MCF 10A (cell line): ENCODE measurements at regions of chr16 and their contacts with region 1.

Region 1: GRCh38 chr16:87636072-87636684 is 33.9 kb downstream of the JPH3 start:
- DNase-seq: peak; percentile 93
- H3K4me3 Mint-ChIP-seq: peak overlapping the region; percentile 67
- H3K27ac Mint-ChIP-seq: no peak overlapping the region
- H3K4me1 Mint-ChIP-seq: no peaks in the 10 kb centered on the region
- H3K27me3 Mint-ChIP-seq: peaks cover 32% of the 10 kb centered on the region
- CTCF ChIP-seq: peak; percentile 86

Region 2: DNA sequence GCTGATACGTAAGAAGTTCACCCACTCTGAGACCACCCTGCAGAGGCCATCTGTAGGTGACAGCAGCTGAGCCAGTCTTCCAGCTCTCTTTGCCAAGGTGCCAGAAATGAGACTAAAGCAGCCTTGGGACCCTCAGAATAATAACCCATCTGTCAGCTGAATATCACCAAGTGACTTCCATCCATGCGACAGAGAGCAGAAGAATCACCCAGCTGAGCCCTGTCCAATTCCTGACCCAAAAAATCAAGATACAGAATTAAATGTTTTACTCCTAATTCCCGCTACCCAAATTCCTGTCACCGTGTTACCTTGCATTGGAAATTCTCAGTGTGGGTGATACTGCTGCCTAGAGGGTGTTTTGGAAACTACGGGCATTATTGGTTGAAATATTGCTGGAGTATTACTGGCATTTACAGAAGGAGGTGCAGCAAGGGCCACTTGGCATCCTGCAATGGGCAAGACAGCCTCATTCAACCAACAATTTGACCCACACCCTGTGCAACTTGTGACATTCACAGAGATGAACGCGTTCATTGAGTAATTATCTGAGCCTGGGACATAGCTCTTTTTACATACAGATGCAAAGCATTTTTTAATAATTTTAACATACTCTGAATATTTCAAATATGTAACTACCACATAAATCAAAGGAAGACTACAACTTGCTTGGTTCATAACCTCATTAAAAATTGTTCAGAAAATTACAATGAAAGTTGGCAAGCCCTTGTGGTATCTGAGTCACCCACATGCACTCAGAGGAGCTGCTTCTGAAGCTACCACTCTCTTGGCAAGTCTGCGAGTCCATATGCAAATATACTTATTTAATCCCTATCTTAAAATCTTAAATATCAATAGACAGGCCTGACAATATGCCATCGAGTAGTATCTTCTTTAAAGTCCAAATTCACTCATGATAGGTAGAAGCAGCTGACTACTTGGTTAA is 445.6 kb before region 1 on chr16:
- CTCF ChIA-PET with region 1: no interaction called
- POLR2A ChIA-PET with region 1: no interaction called
- intact Hi-C with region 1: no loop called
- DNase-seq: no peak
- H3K4me3 Mint-ChIP-seq: no peak overlapping the region
- H3K27ac Mint-ChIP-seq: no peak overlapping the region
- H3K4me1 Mint-ChIP-seq: no peaks in the 10 kb centered on the region
- H3K27me3 Mint-ChIP-seq: no peaks in the 10 kb centered on the region
- CTCF ChIP-seq: no peak

Region 3: DNA sequence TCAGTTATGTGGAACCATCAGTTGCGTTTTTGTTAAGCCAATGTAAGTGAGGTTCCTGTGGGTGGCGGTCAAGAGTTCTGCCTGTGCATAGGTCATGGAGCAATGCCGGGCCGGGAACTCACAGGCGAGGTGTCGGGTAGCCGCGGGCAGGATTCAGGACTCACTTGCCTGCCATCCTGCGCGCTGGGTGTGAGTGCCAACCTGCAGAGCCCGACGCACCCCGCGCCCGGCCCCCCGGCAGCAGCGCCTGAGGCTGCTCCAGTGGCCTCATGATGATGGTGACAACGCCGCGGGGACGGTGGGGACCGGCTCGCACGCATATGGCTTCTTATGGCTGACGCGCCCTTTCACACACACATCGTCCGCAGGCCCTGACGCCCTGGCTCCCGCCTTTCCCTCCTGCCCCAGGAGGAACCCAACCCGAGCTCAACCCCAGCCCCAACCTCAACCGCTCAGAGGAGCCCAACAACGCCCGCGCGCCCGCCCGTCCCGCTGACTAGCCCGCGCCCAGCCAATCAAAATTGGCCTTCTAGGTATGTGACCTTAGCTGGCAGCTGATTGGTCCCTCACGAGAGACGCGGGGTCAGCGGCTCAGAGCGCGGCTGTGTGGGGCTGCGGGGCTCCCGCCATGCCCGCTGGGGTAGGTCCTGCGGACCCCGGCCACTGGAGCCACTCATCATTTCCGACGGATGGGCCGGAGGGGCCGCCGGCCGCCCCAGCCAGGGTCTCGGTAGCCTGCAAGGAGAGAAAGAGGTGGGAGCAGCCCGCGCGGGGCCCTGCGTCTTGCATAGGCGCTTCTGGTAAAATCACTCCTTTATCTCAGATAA is 319.0 kb before region 1 on chr16 and contains the start of gene C16orf95:
- CTCF ChIA-PET with region 1: interaction called, 4 read pairs
- POLR2A ChIA-PET with region 1: interaction called, 6 read pairs
- intact Hi-C with region 1: loop called (anchors 2 kb)
- DNase-seq: peak; percentile 95
- H3K4me3 Mint-ChIP-seq: peak within 1 kb of the TSS; percentile 83
- H3K27ac Mint-ChIP-seq: peak within 1 kb of the TSS; percentile 93
- H3K4me1 Mint-ChIP-seq: peaks cover 6% of the 10 kb centered on the region
- H3K27me3 Mint-ChIP-seq: no peaks in the 10 kb centered on the region
- CTCF ChIP-seq: peak; percentile 50
- total RNA-seq, gene C16orf95: 5.7 and 5.8 TPM in 2 replicates

Region 4: DNA sequence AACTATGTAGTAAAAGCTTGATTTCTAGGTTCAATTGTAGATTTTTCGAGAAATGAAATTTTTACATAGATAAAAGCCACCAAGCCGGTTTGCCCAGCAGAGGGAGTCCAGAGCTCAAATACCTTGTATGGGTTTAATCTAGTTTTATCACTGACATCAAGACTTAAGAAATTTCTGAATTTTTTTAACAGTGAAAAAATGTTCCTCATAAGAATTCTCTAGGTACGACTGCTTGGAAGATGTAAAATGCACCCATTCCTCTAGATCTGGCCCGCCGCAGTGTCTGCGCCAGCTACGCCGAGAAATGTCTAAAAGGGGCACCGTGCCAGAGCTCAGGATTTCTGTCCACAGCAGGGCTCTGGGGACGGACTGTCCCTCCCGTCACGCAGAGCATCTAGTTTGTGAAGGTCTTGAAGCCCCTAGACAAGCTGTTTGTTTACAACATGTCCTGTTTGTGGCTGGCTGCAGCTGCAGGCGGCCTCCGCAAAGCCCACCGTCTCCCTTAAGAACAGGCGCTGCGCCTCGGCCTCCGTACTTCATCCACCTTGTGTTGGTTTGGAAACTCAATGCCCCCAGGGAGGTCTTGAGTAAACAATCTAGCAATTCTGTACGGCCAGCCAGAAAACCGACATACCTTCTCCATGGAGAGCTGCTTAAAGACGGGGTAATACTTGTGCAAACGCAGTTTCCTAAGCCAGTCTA is 219.2 kb before region 1 on chr16:
- CTCF ChIA-PET with region 1: interaction called, 35 read pairs
- POLR2A ChIA-PET with region 1: interaction called, 10 read pairs
- intact Hi-C with region 1: loop called (anchors 1 kb)
- DNase-seq: peak; percentile 56
- H3K4me3 Mint-ChIP-seq: no peak overlapping the region
- H3K27ac Mint-ChIP-seq: no peak overlapping the region
- H3K4me1 Mint-ChIP-seq: no peaks in the 10 kb centered on the region
- H3K27me3 Mint-ChIP-seq: no peaks in the 10 kb centered on the region
- CTCF ChIP-seq: peak; percentile 52

Region 5: GRCh38 chr16:87487361-87488001 is 148.7 kb before region 1 on chr16:
- CTCF ChIA-PET with region 1: interaction called, 12 read pairs
- POLR2A ChIA-PET with region 1: interaction called, 17 read pairs
- intact Hi-C with region 1: loop called (anchors 10 kb)
- DNase-seq: peak; percentile 73
- H3K4me3 Mint-ChIP-seq: peak overlapping the region; percentile 74
- H3K27ac Mint-ChIP-seq: peak overlapping the region; percentile 25
- H3K4me1 Mint-ChIP-seq: peaks cover 65% of the 10 kb centered on the region
- H3K27me3 Mint-ChIP-seq: no peaks in the 10 kb centered on the region
- CTCF ChIP-seq: no peak

Region 6: DNA sequence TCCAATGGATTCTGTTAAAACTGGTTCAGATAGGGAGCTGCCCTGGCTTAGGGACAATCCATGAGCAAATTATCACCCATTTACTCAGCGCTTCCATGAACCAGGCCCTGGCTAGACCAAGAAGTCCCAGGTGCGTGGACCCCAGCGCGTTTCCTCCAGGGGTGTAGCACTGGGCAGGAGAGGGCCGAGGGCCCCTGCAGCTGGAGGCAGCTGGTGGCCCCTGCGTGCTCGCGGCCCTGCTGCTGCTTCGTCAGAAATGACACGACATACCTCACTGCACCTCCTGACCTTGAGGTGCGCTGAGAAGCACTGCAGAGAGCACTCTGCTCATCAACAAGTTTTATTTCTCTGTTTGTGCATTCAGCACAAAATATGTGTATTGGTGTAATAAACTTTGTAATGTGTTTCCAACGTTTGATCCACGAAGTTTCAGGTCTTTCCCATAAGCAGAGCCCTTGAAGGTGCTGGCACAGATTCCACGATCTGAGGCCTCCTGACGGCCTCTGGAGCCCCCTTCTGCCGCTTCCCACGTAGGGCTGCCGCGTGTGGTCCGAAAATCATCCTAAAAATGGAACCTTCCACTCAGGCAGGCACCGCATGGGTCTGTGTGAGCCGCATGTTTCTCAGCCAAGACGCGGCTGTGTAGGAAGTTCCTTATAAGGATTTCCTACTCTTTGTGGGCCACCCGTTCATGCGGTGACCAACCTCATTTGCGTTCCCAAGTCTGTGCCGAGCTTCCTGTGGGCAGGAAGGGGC is 92.6 kb before region 1 on chr16:
- CTCF ChIA-PET with region 1: interaction called, 13 read pairs
- POLR2A ChIA-PET with region 1: no interaction called
- intact Hi-C with region 1: no loop called
- DNase-seq: no peak
- H3K4me3 Mint-ChIP-seq: no peak overlapping the region
- H3K27ac Mint-ChIP-seq: no peak overlapping the region
- H3K4me1 Mint-ChIP-seq: no peaks in the 10 kb centered on the region
- H3K27me3 Mint-ChIP-seq: peaks cover 23% of the 10 kb centered on the region
- CTCF ChIP-seq: no peak

Region 7: DNA sequence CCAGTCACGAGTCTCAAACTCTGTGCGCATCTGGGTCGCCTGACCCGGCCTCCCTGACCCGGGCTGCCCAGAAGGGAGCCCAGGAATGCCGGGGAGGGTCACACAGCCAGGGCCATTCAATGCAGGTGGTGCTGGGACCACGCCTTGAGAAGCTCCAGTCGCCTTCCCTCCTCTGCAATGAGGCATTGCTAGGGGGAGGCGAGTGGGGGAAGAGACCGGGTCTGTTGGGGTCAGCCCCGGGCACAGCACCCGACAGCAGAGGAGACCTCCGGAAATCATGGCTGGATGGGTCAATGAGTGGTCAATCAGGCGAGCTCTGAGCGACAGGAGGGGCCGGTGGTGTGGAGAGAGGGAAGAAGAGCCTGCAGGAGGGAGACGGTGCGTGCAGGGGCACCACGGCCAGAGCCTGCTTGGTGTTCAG is 20.5 kb before region 1 on chr16:
- CTCF ChIA-PET with region 1: interaction called, 10 read pairs
- POLR2A ChIA-PET with region 1: no interaction called
- intact Hi-C with region 1: no loop called
- DNase-seq: no peak
- H3K4me3 Mint-ChIP-seq: no peak overlapping the region
- H3K27ac Mint-ChIP-seq: no peak overlapping the region
- H3K4me1 Mint-ChIP-seq: no peaks in the 10 kb centered on the region
- H3K27me3 Mint-ChIP-seq: peaks cover 41% of the 10 kb centered on the region
- CTCF ChIP-seq: no peak

Region 8: GRCh38 chr16:87713451-87714229 is 77.5 kb after region 1 on chr16:
- CTCF ChIA-PET with region 1: no interaction called
- POLR2A ChIA-PET with region 1: no interaction called
- intact Hi-C with region 1: no loop called
- DNase-seq: no peak
- H3K4me3 Mint-ChIP-seq: no peak overlapping the region
- H3K27ac Mint-ChIP-seq: no peak overlapping the region
- H3K4me1 Mint-ChIP-seq: no peaks in the 10 kb centered on the region
- H3K27me3 Mint-ChIP-seq: no peaks in the 10 kb centered on the region
- CTCF ChIP-seq: no peak

Region 9: DNA sequence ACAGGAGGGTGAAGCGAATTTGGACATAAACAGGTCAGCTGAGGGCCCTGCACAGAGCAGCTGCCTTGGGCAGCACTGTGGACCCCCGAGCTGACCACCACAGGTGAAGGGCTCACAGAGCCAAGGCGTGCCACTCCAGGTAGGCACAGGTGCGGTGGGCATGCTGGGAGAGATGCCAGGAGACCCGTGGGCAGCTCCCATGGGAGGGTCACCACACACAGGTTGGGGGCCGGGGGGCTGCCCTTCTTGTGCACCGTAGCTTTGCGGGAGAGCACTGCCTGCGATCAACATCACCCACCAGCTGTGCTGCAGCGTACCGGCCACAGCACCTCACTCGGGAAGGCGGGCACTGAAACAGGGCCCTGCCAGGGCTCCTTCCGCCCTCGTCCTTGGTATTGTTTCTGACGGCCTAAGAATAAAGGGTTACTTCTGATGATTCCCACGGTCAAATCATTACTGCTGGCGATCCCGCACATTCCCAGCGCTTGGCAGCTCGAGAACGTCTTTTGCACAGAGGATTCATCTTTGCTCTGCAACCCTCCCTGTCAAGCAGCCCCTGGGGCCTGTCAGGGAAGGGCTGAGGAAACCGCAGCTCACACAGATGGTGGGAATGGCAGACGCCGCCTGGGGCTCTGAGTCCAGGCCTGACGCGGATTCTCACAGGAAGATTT is 496.8 kb after region 1 on chr16:
- CTCF ChIA-PET with region 1: no interaction called
- POLR2A ChIA-PET with region 1: no interaction called
- intact Hi-C with region 1: no loop called
- DNase-seq: no peak
- H3K4me3 Mint-ChIP-seq: no peak overlapping the region
- H3K27ac Mint-ChIP-seq: no peak overlapping the region
- H3K4me1 Mint-ChIP-seq: no peaks in the 10 kb centered on the region
- H3K27me3 Mint-ChIP-seq: no peaks in the 10 kb centered on the region
- CTCF ChIP-seq: no peak